ENCODE measurements at regions of chr6 and their contacts with region 1.

Region 1: GRCh38 chr6:166382933-166383801 is at the start of gene MPC1:
- DNase-seq: peak; percentile 91 to 96 (median 94)
- ATAC-seq: peak; percentile 98
- H3K4me3 ChIP-seq: peak within 1 kb of the TSS; percentile 85
- H3K4me3 Mint-ChIP-seq: peak within 1 kb of the TSS; percentile 89 to 98 (median 94)
- H3K27ac ChIP-seq: peak within 1 kb of the TSS; percentile 87
- H3K27ac Mint-ChIP-seq: peak within 1 kb of the TSS; percentile 78 to 95 (median 91)
- H3K4me1 ChIP-seq: no peaks in the 10 kb centered on the region
- H3K4me1 Mint-ChIP-seq: peaks cover 4 to 20% (median 16%) of the 10 kb centered on the region in 7 donors
- H3K27me3 ChIP-seq: no peaks in the 10 kb centered on the region
- H3K27me3 Mint-ChIP-seq: peaks cover 0 to 8% (median 0%) of the 10 kb centered on the region in 5 donors
- total RNA-seq, gene MPC1: 18.5 to 31.1 (median 26.5) TPM

Region 2: GRCh38 chr6:166156942-166157341 is 226.2 kb before region 1 on chr6:
- CTCF ChIA-PET with region 1: no interaction called
- POLR2A ChIA-PET with region 1: no interaction called
- intact Hi-C with region 1: loop called in 1 of 2 experiments (anchors 5 kb)
- DNase-seq: no peak
- ATAC-seq: no peak
- H3K4me3 ChIP-seq: no peak overlapping the region
- H3K4me3 Mint-ChIP-seq: no peak overlapping the region
- H3K27ac ChIP-seq: no peak overlapping the region
- H3K27ac Mint-ChIP-seq: no peak overlapping the region
- H3K4me1 ChIP-seq: no peaks in the 10 kb centered on the region
- H3K4me1 Mint-ChIP-seq: no peaks in the 10 kb centered on the region
- H3K27me3 ChIP-seq: no peaks in the 10 kb centered on the region
- H3K27me3 Mint-ChIP-seq: peaks cover 4 to 33% (median 6%) of the 10 kb centered on the region in 5 donors

Region 3: DNA sequence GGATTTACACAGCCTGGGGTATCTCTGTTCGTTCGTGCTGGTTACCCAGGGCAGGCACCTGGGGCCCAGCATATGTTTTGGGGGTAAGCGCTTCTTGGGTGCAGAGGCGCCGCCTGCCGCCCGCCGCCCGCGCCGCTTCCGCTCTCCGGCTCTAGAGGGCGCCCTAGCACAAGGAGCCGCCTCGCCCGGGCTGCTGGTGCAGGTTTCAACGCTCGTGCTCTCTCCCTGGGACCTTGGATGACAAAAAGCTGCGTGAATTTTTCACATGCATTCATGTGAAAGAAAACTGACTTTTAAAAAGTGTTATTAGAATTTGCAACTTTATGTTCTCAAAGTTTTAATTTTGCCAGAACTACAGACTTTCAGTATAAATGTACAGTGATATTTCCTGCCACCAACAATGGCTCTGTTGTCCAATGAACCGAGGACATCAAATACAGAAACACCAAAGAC is 107.4 kb before region 1 on chr6:
- CTCF ChIA-PET with region 1: interaction called, 5 read pairs
- POLR2A ChIA-PET with region 1: interaction called, 3 read pairs
- intact Hi-C with region 1: loop called (anchors 1 kb)
- DNase-seq: peak; percentile 49 to 92 (median 78)
- ATAC-seq: peak; percentile 95
- H3K4me3 ChIP-seq: no peak overlapping the region
- H3K4me3 Mint-ChIP-seq: peak overlapping the region in 1 of 10 donors; percentile 35
- H3K27ac ChIP-seq: no peak overlapping the region
- H3K27ac Mint-ChIP-seq: peak overlapping the region in 4 of 9 donors; percentile 30 to 85 (median 74)
- H3K4me1 ChIP-seq: peaks cover 0 to 4% of the 10 kb centered on the region in 2 donors
- H3K4me1 Mint-ChIP-seq: peaks cover 0 to 7% (median 6%) of the 10 kb centered on the region in 7 donors
- H3K27me3 ChIP-seq: no peaks in the 10 kb centered on the region
- H3K27me3 Mint-ChIP-seq: peaks cover 0 to 15% (median 0%) of the 10 kb centered on the region in 5 donors

Region 4: DNA sequence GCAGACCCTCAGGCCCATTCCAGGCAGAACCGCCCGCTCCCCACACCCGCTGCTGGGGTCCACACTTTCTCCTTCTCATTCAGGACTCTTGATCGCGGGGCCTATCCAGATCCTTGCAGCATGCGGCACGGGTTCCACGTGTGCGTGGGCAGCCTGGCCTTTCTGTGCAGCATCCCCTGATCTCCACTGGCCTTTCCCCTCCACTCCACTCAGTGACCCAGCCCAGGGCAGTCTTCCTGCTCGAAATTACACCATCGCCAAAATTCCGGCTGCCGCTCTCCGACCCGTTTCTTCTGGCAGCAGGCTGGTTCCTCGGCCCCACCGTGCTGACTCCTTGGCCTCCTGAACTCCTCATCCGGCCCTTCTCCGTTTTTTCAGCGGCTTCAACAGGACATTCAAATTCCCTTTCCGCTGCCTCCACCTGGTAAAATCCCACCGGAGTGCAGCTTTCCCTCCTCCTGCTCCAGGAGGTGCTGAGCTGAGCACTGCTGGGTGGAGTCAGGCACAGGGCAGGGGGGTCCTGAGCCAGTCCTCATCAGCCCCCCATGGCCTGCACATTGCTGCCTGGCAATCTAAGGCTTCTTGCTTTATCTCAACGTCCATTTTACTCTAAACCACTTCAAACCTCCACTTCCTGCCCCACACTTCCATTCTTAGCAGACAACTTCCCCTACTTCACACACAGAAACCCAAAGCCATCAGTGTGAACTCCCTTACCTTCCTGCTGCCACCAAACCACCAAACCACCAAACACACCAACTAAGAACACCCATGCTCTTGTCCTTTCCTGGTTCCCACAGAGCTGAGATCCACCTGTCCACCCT is 49.8 kb before region 1 on chr6:
- CTCF ChIA-PET with region 1: interaction called, 4 read pairs
- POLR2A ChIA-PET with region 1: interaction called, 3 read pairs
- intact Hi-C with region 1: loop called in 1 of 2 experiments (anchors 2 kb)
- DNase-seq: peak in 7 of 9 donors; percentile 31 to 59 (median 46)
- ATAC-seq: peak; percentile 86
- H3K4me3 ChIP-seq: peak overlapping the region; percentile 15
- H3K4me3 Mint-ChIP-seq: peak overlapping the region; percentile 39 to 81 (median 68)
- H3K27ac ChIP-seq: no peak overlapping the region
- H3K27ac Mint-ChIP-seq: peak overlapping the region in 8 of 9 donors; percentile 13 to 73 (median 44)
- H3K4me1 ChIP-seq: peaks cover 31 to 40% of the 10 kb centered on the region in 2 donors
- H3K4me1 Mint-ChIP-seq: peaks cover 38 to 63% (median 55%) of the 10 kb centered on the region in 7 donors
- H3K27me3 ChIP-seq: no peaks in the 10 kb centered on the region
- H3K27me3 Mint-ChIP-seq: no peaks in the 10 kb centered on the region

Region 5: GRCh38 chr6:166402582-166403277 is 19.6 kb after region 1 on chr6:
- CTCF ChIA-PET with region 1: interaction called, 9 read pairs
- POLR2A ChIA-PET with region 1: interaction called, 4 read pairs
- intact Hi-C with region 1: loop called in 1 of 2 experiments (anchors 1 kb)
- DNase-seq: no peak
- ATAC-seq: no peak
- H3K4me3 ChIP-seq: no peak overlapping the region
- H3K4me3 Mint-ChIP-seq: no peak overlapping the region
- H3K27ac ChIP-seq: no peak overlapping the region
- H3K27ac Mint-ChIP-seq: peak overlapping the region in 5 of 9 donors; percentile 19 to 77 (median 54)
- H3K4me1 ChIP-seq: peaks cover 4 to 6% of the 10 kb centered on the region in 2 donors
- H3K4me1 Mint-ChIP-seq: peaks cover 0 to 7% (median 4%) of the 10 kb centered on the region in 7 donors
- H3K27me3 ChIP-seq: no peaks in the 10 kb centered on the region
- H3K27me3 Mint-ChIP-seq: peaks cover 0 to 6% (median 4%) of the 10 kb centered on the region in 5 donors

Region 6: GRCh38 chr6:166488076-166488685 is 105.0 kb after region 1 on chr6:
- CTCF ChIA-PET with region 1: interaction called, 3 read pairs
- POLR2A ChIA-PET with region 1: interaction called, 5 read pairs
- intact Hi-C with region 1: loop called (anchors 1 kb)
- DNase-seq: peak; percentile 37 to 90 (median 86)
- ATAC-seq: peak; percentile 94
- H3K4me3 ChIP-seq: peak overlapping the region; percentile 20
- H3K4me3 Mint-ChIP-seq: peak overlapping the region; percentile 43 to 84 (median 78)
- H3K27ac ChIP-seq: peak overlapping the region; percentile 79
- H3K27ac Mint-ChIP-seq: peak overlapping the region; percentile 93 to 98 (median 96)
- H3K4me1 ChIP-seq: peaks cover 17 to 18% of the 10 kb centered on the region in 2 donors
- H3K4me1 Mint-ChIP-seq: peaks cover 9 to 35% (median 27%) of the 10 kb centered on the region in 7 donors
- H3K27me3 ChIP-seq: no peaks in the 10 kb centered on the region
- H3K27me3 Mint-ChIP-seq: no peaks in the 10 kb centered on the region

Region 7: DNA sequence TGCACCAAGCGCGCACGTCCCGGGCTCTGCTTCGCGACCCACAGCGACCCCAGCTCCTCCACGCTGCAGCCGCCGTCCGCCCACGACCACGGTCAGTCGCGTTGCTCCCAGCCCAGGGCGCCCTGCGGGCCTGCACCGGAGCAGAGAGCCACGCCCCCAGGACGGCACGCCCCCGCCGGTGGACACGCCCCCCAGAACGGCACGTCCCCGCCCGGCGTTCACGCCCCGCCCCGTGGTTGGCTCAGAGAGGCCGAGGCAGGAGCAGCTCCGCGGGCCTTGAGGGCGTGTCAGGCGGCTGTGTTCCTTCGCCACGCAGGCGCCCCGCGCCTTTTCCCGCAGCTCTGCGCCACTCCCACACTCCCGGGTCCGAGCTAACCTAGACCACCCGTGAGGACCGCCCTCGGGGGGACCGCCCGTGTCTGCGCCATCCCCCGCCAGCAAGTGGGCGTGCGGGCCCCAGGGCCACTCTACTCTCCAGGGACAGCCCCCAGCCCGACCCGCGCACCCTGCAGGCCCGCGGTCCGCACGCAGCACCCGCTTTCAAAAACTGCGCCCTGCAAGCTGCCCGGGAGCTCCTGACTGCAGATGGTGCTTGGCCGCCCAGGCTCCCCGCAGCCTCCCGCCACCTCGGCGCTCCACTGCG is 573.4 kb after region 1 on chr6 and contains the start of gene RNASET2:
- CTCF ChIA-PET with region 1: no interaction called
- POLR2A ChIA-PET with region 1: no interaction called
- intact Hi-C with region 1: loop called (anchors 1 to 2 kb)
- DNase-seq: peak; percentile 95 to 100 (median 99)
- ATAC-seq: peak; percentile 93
- H3K4me3 ChIP-seq: peak within 1 kb of the TSS; percentile 86
- H3K4me3 Mint-ChIP-seq: peak within 1 kb of the TSS; percentile 87 to 99 (median 96)
- H3K27ac ChIP-seq: peak within 1 kb of the TSS; percentile 92
- H3K27ac Mint-ChIP-seq: peak within 1 kb of the TSS; percentile 95 to 99 (median 99)
- H3K4me1 ChIP-seq: peaks cover 41 to 66% of the 10 kb centered on the region in 2 donors
- H3K4me1 Mint-ChIP-seq: peaks cover 56 to 79% (median 73%) of the 10 kb centered on the region in 7 donors
- H3K27me3 ChIP-seq: no peaks in the 10 kb centered on the region
- H3K27me3 Mint-ChIP-seq: no peaks in the 10 kb centered on the region
- total RNA-seq, gene RNASET2: 147 to 332 (median 264) TPM

Measured in naive thymus-derived CD4-positive, alpha-beta T cell (primary cell).